HepG2 (cell line): ENCODE measurements at regions of chrX and their contacts with region 1.

Region 1: DNA sequence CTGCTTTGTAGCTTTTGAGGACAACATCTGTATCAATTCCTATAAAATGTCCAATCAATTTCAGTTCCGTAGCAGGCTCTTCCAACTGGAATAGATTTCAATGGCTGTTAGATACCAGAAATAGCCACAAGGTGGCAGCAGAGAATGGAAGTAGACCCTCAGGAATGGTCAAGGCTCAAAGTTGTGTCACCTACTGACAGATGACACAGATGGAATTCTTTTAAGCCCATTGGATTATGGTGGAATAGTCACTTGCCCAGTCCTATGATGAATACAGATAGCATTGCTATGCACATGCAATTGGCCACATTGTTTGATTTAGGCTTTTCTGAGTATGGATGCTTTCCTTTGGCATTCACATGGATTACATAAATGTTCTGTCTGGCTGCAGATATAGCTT is 130.4 kb upstream of the RADX start:
- DNase-seq: peak; percentile 50
- ATAC-seq: peak; percentile 71
- H3K4me3 ChIP-seq: no peak overlapping the region
- H3K27ac ChIP-seq: no peak overlapping the region
- H3K4me1 ChIP-seq: no peaks in the 10 kb centered on the region
- H3K27me3 ChIP-seq: no peaks in the 10 kb centered on the region
- CTCF ChIP-seq: peak; percentile 75
- EP300 ChIP-seq: no peak
- POLR2A ChIP-seq: no peak
- RAD21 ChIP-seq: peak; percentile 67

Region 2: GRCh38 chrX:106437405-106437804 is 43.9 kb before region 1 on chrX:
- CTCF ChIA-PET with region 1: no interaction called
- POLR2A ChIA-PET with region 1: no interaction called
- in situ Hi-C with region 1: no loop called
- intact Hi-C with region 1: no loop called
- DNase-seq: no peak
- ATAC-seq: no peak
- H3K4me3 ChIP-seq: no peak overlapping the region
- H3K27ac ChIP-seq: no peak overlapping the region
- H3K4me1 ChIP-seq: no peaks in the 10 kb centered on the region
- H3K27me3 ChIP-seq: no peaks in the 10 kb centered on the region; a peak in 1 of 5 replicates
- CTCF ChIP-seq: no peak
- EP300 ChIP-seq: no peak
- POLR2A ChIP-seq: no peak
- RAD21 ChIP-seq: no peak

Region 3: GRCh38 chrX:106611679-106612392 is 130.5 kb after region 1 on chrX and contains the start of gene RADX:
- CTCF ChIA-PET with region 1: no interaction called
- POLR2A ChIA-PET with region 1: no interaction called
- in situ Hi-C with region 1: no loop called
- intact Hi-C with region 1: loop called (anchors 10 kb)
- DNase-seq: peak; percentile 58
- ATAC-seq: peak; percentile 99
- H3K4me3 ChIP-seq: peak within 1 kb of the TSS; percentile 60 to 73 (median 72)
- H3K27ac ChIP-seq: no peak within 1 kb of the TSS
- H3K4me1 ChIP-seq: peaks cover 10% of the 10 kb centered on the region
- H3K27me3 ChIP-seq: no peaks in the 10 kb centered on the region
- CTCF ChIP-seq: no peak
- EP300 ChIP-seq: no peak
- POLR2A ChIP-seq: 0 out of 4 replicates have a peak, but pooled peaks of 1 of the 2 experiments have one; percentile 23
- RAD21 ChIP-seq: no peak
- total RNA-seq, gene RADX: 2.6 and 2.7 TPM in 2 replicates

Region 4: DNA sequence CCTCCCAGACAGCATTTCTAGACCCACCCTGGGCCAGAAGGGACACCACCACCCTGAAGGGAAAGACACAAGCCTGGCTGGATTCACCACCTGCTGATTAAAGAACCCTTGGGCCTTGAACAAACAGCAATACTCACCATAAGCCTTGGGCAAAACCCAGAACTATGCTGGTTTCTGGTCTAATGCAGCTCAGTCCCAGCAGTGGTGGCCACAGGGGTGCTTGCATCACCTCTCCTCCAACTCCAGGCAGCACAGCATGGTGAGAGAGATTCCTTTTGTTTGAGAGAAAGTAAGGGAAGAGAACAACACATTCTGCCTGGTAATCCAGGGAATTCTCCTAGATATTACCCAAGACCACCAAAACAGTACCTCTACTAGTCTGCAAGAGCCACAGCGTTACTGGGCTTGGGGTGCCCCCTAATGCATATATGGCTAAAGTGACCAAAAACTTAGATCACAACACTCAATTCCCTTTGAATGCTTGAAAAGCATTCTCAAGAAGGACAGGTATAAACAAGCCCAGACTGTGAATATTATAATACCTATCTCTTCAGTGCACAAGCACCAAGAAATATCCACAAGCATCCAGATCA is 270.8 kb after region 1 on chrX:
- CTCF ChIA-PET with region 1: interaction called, 5 read pairs
- POLR2A ChIA-PET with region 1: no interaction called
- in situ Hi-C with region 1: no loop called
- intact Hi-C with region 1: loop called (anchors 10 kb)
- DNase-seq: no peak
- ATAC-seq: peak; percentile 68
- H3K4me3 ChIP-seq: no peak overlapping the region
- H3K27ac ChIP-seq: no peak overlapping the region
- H3K4me1 ChIP-seq: peaks cover 29% of the 10 kb centered on the region
- H3K27me3 ChIP-seq: no peaks in the 10 kb centered on the region
- CTCF ChIP-seq: peak; percentile 46
- EP300 ChIP-seq: no peak
- POLR2A ChIP-seq: no peak
- RAD21 ChIP-seq: no peak

Region 5: GRCh38 chrX:106791495-106791894 is 310.2 kb after region 1 on chrX:
- CTCF ChIA-PET with region 1: interaction called, 5 read pairs
- POLR2A ChIA-PET with region 1: no interaction called
- in situ Hi-C with region 1: loop called (anchors 25 kb)
- intact Hi-C with region 1: loop called (anchors 10 kb)
- DNase-seq: no peak
- ATAC-seq: no peak
- H3K4me3 ChIP-seq: no peak overlapping the region
- H3K27ac ChIP-seq: no peak overlapping the region
- H3K4me1 ChIP-seq: no peaks in the 10 kb centered on the region
- H3K27me3 ChIP-seq: no peaks in the 10 kb centered on the region
- CTCF ChIP-seq: no peak
- EP300 ChIP-seq: no peak
- POLR2A ChIP-seq: no peak
- RAD21 ChIP-seq: no peak

Region 6: GRCh38 chrX:106987488-106987887 is 506.1 kb after region 1 on chrX:
- CTCF ChIA-PET with region 1: no interaction called
- POLR2A ChIA-PET with region 1: no interaction called
- in situ Hi-C with region 1: no loop called
- intact Hi-C with region 1: no loop called
- DNase-seq: no peak
- ATAC-seq: no peak
- H3K4me3 ChIP-seq: no peak overlapping the region
- H3K27ac ChIP-seq: no peak overlapping the region
- H3K4me1 ChIP-seq: no peaks in the 10 kb centered on the region
- H3K27me3 ChIP-seq: no peaks in the 10 kb centered on the region
- CTCF ChIP-seq: no peak
- EP300 ChIP-seq: no peak
- POLR2A ChIP-seq: no peak
- RAD21 ChIP-seq: no peak